Activated CD4-positive, alpha-beta memory T cell treated with anti-CD3 and anti-CD28 coated beads for 36 hours (primary cell): ENCODE measurements at regions of chr17 and their contacts with region 1.

Region 1: GRCh38 chr17:15999439-16000350 is at the starts of genes TTC19 and ZSWIM7:
- DNase-seq: peak; percentile 97
- H3K4me3 Mint-ChIP-seq: peak within 1 kb of the TSS; percentile 96
- H3K27ac Mint-ChIP-seq: peak within 1 kb of the TSS; percentile 89
- H3K4me1 Mint-ChIP-seq: peaks cover 31% of the 10 kb centered on the region
- H3K27me3 Mint-ChIP-seq: no peaks in the 10 kb centered on the region
- total RNA-seq, gene TTC19: 21.0 to 22.6 TPM
- total RNA-seq, gene ZSWIM7: 11.2 to 12.0 TPM

Region 2: GRCh38 chr17:15257258-15257788 is 742.4 kb before region 1 on chr17:
- CTCF ChIA-PET with region 1: no interaction called
- POLR2A ChIA-PET with region 1: no interaction called
- intact Hi-C with region 1: loop called (anchors 5 kb)
- DNase-seq: peak; percentile 78
- H3K4me3 Mint-ChIP-seq: no peak overlapping the region
- H3K27ac Mint-ChIP-seq: no peak overlapping the region
- H3K4me1 Mint-ChIP-seq: peaks cover 16% of the 10 kb centered on the region
- H3K27me3 Mint-ChIP-seq: peaks cover 57% of the 10 kb centered on the region

Region 3: GRCh38 chr17:15944759-15945529 is 54.8 kb before region 1 on chr17 and contains the start of gene ADORA2B:
- CTCF ChIA-PET with region 1: interaction called, 28 read pairs
- POLR2A ChIA-PET with region 1: interaction called, 12 read pairs
- intact Hi-C with region 1: loop called (anchors 1 kb)
- DNase-seq: peak; percentile 53
- H3K4me3 Mint-ChIP-seq: peak within 1 kb of the TSS; percentile 65
- H3K27ac Mint-ChIP-seq: no peak within 1 kb of the TSS
- H3K4me1 Mint-ChIP-seq: peaks cover 9% of the 10 kb centered on the region
- H3K27me3 Mint-ChIP-seq: peaks cover 42% of the 10 kb centered on the region
- total RNA-seq, gene ADORA2B: 0.24 to 0.27 TPM

Region 4: DNA sequence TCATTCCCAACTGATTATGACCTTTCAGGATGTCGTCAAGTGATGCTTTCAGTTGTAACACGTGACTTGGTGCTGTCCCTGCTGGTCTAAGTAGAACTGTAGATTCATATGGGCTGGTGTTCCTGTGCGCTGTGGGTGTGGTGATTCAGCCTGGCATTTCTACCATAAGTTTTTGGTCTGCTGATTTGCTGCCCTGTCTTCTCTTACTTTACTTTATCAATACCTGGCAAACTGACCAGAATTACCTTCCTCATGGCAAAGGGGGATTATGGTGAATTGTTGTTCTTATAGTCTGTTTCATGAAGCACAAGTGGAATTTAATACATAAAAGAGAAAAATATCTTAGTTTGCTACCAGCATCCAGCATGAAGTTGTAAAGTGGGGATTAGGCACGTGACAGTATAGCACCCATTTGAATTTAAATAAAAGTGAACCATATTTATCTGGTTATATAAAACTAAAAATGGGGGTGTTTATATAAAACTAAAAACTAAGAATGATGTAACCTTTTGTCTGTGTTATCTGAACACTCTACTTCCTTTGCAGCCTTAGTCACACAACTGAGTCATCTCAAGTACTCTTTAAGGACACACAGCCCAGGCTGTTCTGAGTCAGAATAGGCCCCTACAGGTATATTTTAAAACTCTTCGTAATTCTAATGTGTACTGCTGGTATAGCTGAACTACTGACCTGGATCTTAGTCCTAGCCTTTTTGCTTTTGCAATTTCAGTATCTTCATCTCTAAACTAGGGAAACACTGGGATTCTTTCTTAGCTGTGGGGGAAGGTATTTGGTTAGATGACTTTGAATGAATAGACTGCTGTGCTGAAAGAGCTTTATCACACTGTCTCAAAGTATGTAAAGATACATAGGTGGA is 28.3 kb after region 1 on chr17:
- CTCF ChIA-PET with region 1: interaction called, 5 read pairs
- POLR2A ChIA-PET with region 1: interaction called, 4 read pairs
- intact Hi-C with region 1: loop called (anchors 1 kb)
- DNase-seq: peak; percentile 81
- H3K4me3 Mint-ChIP-seq: peak overlapping the region; percentile 64
- H3K27ac Mint-ChIP-seq: peak overlapping the region; percentile 97
- H3K4me1 Mint-ChIP-seq: peaks cover 48% of the 10 kb centered on the region
- H3K27me3 Mint-ChIP-seq: no peaks in the 10 kb centered on the region